ENCODE measurements at regions of chr4 and their contacts with region 1.

Region 1: DNA sequence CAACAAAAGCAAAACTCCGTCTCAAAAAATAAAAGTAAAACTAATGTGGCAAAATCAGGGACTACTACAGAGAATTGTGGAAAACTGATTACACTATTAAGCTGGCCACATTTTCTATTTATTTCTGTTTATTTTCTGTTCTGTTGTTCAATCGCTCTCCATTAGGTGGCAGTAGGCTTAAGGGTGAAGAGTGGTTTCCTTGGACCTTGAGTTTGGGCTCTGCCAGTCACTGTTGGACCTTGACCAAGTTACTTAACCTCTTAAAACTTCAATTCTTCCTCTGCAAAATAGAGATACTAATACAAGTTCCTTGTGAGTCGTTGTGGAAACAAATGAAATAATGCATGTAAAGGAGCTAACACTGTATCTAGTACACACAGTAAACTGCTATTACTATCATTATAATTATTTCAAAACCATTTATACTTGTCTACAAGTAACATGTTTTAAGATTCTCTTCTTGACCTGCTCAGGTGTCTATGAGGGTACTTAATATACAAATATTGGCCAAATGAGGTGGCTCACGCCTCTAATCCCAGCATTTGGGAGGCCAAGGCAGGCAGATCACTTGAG is 15.2 kb downstream of the HSD17B11 start:
- DNase-seq: no peak
- H3K4me3 Mint-ChIP-seq: no peak overlapping the region
- H3K27ac Mint-ChIP-seq: no peak overlapping the region
- H3K4me1 Mint-ChIP-seq: no peaks in the 10 kb centered on the region
- H3K27me3 Mint-ChIP-seq: no peaks in the 10 kb centered on the region

Region 2: GRCh38 chr4:86557526-86557925 is 818.3 kb before region 1 on chr4:
- CTCF ChIA-PET with region 1: no interaction called
- intact Hi-C with region 1: no loop called
- DNase-seq: no peak
- H3K4me3 Mint-ChIP-seq: no peak overlapping the region
- H3K27ac Mint-ChIP-seq: no peak overlapping the region
- H3K4me1 Mint-ChIP-seq: no peaks in the 10 kb centered on the region
- H3K27me3 Mint-ChIP-seq: peaks cover 2% of the 10 kb centered on the region

Region 3: DNA sequence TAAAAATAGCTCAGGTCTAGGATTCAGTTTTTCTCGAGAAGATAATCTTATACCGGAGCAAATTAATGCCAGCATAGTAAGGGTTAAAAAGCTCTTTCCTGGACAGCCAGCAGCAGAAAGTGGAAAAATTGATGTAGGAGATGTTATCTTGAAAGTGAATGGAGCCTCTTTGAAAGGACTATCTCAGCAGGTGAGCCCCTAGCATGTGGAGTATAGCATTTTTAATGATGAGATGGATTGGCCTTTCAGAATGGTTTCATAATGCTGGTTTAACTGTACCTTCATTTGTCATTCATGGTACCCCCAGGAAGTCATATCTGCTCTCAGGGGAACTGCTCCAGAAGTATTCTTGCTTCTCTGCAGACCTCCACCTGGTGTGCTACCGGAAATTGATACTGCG is 606.0 kb before region 1 on chr4:
- CTCF ChIA-PET with region 1: no interaction called
- intact Hi-C with region 1: no loop called
- DNase-seq: no peak
- H3K4me3 Mint-ChIP-seq: no peak overlapping the region
- H3K27ac Mint-ChIP-seq: no peak overlapping the region
- H3K4me1 Mint-ChIP-seq: no peaks in the 10 kb centered on the region
- H3K27me3 Mint-ChIP-seq: no peaks in the 10 kb centered on the region

Region 4: GRCh38 chr4:87144356-87144755 is 231.4 kb before region 1 on chr4:
- CTCF ChIA-PET with region 1: no interaction called
- intact Hi-C with region 1: loop called (anchors 10 kb)
- DNase-seq: no peak
- H3K4me3 Mint-ChIP-seq: no peak overlapping the region
- H3K27ac Mint-ChIP-seq: no peak overlapping the region
- H3K4me1 Mint-ChIP-seq: no peaks in the 10 kb centered on the region
- H3K27me3 Mint-ChIP-seq: no peaks in the 10 kb centered on the region

Region 5: GRCh38 chr4:87363567-87363966 is 12.2 kb before region 1 on chr4:
- CTCF ChIA-PET with region 1: interaction called, 17 read pairs
- intact Hi-C with region 1: no loop called
- DNase-seq: no peak
- H3K4me3 Mint-ChIP-seq: no peak overlapping the region
- H3K27ac Mint-ChIP-seq: no peak overlapping the region
- H3K4me1 Mint-ChIP-seq: no peaks in the 10 kb centered on the region
- H3K27me3 Mint-ChIP-seq: no peaks in the 10 kb centered on the region

Region 6: GRCh38 chr4:87390891-87391575 is 15.2 kb after region 1 on chr4 and contains the start of gene HSD17B11:
- CTCF ChIA-PET with region 1: interaction called, 20 read pairs
- intact Hi-C with region 1: no loop called
- DNase-seq: peak; percentile 85
- H3K4me3 Mint-ChIP-seq: peak within 1 kb of the TSS; percentile 78
- H3K27ac Mint-ChIP-seq: peak within 1 kb of the TSS; percentile 82
- H3K4me1 Mint-ChIP-seq: peaks cover 31% of the 10 kb centered on the region
- H3K27me3 Mint-ChIP-seq: no peaks in the 10 kb centered on the region
- total RNA-seq, gene HSD17B11: 14.2 to 15.9 TPM

Region 7: DNA sequence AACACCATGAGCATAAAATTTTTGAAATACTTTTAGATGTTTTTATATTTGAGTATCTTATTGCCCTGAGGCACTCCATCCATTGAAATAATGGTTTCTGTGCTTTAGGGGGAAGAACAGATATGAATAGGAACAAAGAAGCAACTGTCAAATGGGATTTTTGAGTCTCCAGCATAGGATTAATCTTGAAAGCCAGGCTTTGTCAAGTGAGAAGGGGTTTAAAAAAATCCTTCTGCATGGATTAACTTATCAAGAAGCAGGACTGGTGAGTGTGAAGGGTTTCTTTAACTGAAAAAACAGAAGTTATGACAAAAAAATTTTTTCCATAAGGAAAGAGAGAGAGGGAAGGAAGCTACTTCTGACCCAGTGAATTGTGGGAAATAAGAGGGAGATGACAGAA is 39.0 kb after region 1 on chr4:
- CTCF ChIA-PET with region 1: interaction called, 18 read pairs
- intact Hi-C with region 1: no loop called
- DNase-seq: no peak
- H3K4me3 Mint-ChIP-seq: no peak overlapping the region
- H3K27ac Mint-ChIP-seq: no peak overlapping the region
- H3K4me1 Mint-ChIP-seq: no peaks in the 10 kb centered on the region
- H3K27me3 Mint-ChIP-seq: peaks cover 2% of the 10 kb centered on the region

Region 8: GRCh38 chr4:87422104-87423052 is 46.6 kb after region 1 on chr4 and contains the start of gene NUDT9:
- CTCF ChIA-PET with region 1: interaction called, 18 read pairs
- intact Hi-C with region 1: loop called (anchors 1 kb)
- DNase-seq: peak; percentile 91
- H3K4me3 Mint-ChIP-seq: peak within 1 kb of the TSS; percentile 98
- H3K27ac Mint-ChIP-seq: peak within 1 kb of the TSS; percentile 97
- H3K4me1 Mint-ChIP-seq: peaks cover 32% of the 10 kb centered on the region
- H3K27me3 Mint-ChIP-seq: no peaks in the 10 kb centered on the region
- total RNA-seq, gene NUDT9: 12.1 to 13.4 TPM

Region 9: GRCh38 chr4:87465739-87466366 is 90.0 kb after region 1 on chr4:
- CTCF ChIA-PET with region 1: interaction called, 74 read pairs
- intact Hi-C with region 1: loop called (anchors 1 kb)
- DNase-seq: no peak
- H3K4me3 Mint-ChIP-seq: no peak overlapping the region
- H3K27ac Mint-ChIP-seq: no peak overlapping the region
- H3K4me1 Mint-ChIP-seq: no peaks in the 10 kb centered on the region
- H3K27me3 Mint-ChIP-seq: no peaks in the 10 kb centered on the region